Head of caudate nucleus (tissue), 42 donors: ENCODE measurements at regions of chr1 and their contacts with region 1.

Region 1: DNA sequence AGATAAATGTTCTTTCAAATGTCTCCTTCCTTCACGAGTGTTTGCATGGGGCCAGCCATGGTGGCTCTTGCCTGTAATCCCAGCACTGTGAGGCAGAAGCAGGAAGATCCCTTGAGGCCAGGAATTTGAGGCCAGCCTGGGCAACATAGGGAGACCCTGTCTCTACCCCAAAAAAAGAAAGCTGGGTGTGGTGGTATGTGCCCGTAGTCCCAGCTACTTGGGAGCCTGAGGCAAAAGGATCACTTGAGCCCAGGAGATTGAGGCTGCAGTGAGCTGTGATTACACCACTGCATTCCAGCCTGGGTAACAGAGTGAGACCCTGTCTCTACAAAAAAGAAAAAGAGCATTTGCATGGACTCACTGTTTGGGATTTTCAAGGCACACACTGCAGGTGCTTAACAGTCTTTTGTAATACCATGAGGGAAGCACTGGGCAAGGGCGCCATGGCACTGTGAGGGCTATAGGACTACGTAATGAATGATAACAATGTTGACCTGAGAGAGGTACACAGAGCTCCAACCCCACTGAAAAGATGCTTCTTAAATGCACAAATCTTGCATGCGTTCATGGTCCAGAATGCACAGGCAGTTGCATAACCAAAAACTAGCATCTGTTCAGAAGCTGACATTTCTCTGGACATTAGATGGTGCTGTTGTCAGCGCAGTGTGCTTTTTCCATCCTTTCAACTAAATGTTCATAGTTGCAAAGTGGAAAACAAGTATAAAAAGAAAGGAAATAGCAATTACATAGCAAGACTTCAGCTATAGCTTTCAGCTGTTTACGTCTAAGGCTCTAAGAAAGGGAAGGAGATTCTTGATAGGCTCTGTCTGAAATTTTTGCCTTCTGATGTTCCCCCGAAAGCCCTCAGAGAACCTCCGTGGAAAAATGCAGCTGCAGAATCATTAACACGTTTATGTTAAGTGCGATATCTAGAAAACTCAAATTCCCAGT is 7.8 kb upstream of the TARBP1 start:
- DNase-seq: peak in 36 of 42 donors; percentile 11 to 83 (median 53)

Region 2: DNA sequence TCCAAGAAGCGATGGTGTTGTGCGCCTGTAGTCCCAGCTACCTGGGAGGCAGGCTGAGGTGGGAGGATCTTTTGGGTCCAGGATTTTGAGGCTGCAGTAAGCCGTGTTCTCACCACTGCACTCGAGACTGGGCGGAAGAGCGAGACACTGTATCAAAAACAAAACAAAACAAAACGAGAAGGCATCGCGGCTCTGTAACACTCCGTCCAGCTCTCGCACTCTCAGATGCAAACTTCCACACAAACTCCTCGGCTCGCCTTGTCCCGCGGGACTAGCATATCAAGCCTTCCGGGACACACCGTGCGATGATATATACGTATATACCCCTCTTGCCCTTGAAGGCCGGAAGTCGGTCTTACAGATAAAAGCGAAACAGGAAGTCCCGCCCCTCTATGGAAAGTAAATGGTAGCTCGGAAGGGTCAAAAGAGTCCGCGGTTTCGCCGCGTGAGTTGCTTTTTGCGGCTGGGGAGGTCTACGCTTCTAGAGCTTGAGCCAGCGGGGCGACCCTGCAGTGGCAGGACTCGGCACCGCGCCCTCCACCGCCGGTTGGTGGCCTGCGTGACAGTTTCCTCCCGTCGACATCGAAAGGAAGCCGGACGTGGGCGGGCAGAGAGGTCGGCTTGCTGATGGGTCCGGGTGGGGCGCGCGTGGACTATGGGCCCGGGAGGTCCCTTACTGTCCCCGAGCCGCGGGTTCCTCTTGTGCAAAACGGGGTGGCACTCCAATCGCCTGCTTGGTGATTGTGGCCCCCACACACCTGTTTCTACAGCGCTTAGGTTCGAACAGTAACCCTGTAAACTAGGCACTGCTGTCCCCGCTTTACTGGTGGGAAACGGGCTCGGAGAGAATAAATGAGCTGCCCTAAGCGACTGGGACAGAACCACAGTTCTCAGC is 113.5 kb before region 1 on chr1 and contains the start of gene COA6:
- intact Hi-C with region 1: loop called (anchors 10 kb)
- DNase-seq: peak; percentile 79 to 96 (median 90)

Region 3: DNA sequence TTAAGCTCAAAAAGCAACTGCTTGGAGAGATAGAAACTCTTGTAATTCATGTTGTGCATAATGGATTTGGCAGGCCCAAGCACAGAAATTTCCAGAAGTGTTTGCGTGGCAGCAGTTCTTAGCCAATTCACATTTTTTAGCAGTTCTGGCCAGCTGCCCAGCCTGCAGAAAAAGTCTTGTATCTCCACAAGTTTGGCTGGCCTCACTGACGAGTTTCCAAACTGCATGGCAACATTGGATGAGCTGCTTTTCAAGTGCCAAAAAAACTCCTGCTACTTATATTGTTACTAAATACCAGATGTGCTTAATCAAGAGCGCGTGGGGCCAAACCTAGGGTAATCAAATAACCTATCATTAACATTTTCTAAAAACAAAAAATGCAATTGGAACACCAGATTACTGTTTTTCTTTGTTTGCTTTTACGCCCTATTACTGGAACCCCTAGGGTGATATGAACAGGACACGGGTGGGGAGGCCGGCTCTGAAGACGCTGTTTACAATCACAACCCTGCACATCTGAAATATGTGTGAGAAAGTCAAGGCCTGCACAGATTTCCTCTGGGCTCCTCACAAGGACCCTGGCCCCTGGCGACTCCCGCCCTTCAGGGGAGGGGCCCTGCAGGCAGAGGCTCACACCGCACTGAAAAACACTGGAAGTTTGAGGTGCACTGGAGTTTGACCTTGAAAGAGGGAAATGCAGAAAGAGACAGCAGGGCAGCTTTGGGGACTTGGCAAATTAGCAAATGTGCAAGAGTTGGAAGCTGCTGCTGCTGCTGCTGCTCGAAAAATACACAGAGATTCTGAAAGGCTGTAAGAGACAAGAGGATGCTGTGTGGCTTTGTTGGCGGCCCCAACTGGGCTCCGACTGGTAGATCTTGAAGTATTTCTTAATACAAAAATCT is 47.5 kb after region 1 on chr1:
- intact Hi-C with region 1: no loop called
- DNase-seq: peak in 38 of 42 donors; percentile 39 to 90 (median 76)

Region 4: DNA sequence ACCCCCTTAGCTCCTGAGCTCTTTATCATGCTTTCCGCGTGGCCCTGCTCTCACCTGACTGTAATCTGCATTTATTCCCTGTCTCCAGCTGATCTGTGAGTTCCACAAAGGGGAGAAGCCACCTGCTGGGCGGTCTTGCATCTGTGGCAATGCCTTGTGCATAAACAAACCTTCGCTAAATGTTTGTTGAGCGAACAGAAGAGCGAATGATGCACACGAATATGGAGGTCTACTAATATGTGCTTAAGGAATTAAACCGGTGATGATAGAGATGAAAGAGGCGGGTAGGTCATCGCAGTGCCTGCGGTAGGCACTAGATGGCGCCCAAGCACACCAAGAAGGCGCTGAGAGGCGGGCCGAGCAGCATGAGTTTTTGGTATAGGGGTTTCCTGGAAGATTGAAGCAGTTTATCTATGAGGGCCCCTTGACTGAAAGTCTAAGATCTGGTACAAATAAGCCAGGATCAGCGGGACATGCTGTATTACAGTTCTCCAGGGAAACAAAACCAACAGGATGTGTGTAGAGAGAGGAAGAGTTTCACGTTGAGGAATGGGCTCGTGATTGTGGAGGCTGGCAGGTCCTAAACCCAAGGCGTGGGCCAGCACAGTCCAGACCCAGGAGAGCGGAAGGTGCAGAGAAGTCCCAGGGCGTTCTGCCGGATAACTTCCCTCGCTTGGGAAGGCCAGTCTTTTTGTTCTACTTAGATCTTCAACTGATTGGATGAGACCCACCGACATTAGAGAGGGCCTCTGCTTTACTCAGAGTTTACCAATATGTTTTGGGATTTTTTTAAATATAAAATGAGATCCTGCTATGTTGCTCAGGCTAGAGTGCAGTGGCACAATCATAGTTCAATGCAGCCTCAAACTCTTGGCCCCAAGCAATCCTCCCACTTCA is 607.2 kb after region 1 on chr1:
- intact Hi-C with region 1: loop called (anchors 2 kb)
- DNase-seq: peak; percentile 43 to 90 (median 82)